ENCODE measurements at regions of chr11 and their contacts with region 1.

Region 1: DNA sequence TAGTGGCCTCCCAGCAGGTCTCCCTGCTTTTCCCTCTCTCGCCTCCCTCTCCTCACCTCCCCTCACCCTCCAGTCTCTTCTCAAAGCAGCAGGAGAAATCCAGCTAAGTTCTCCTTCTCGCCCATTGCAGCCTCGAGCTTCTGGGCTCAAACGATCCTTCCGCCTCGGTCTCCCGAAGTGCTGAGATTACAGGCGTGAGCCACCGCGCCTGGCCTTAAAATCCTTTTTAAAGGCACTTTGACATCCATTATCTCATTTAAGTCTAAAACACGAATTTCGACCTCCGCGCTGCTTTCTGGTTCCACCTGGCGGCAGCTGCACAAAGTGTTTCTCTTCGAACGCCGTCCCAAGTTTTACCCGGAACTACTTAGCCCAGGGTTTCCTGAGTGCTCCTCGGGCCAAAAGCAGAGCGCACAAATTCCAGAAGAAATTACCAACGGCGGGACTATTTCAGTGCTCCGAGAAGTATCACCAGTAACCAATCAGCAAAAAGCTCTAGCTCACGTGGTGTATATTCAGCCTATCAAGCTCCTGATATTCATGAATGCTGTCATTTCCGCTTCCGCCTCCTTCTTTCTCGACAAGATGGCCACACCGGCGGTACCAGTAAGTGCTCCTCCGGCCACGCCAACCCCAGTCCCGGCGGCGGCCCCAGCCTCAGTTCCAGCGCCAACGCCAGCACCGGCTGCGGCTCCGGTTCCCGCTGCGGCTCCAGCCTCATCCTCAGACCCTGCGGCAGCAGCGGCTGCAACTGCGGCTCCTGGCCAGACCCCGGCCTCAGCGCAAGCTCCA is at the start of gene EIF3F:
- DNase-seq: peak; percentile 82 to 96 (median 92)
- ATAC-seq: peak; percentile 98 to 100 (median 98)
- H3K4me3 ChIP-seq: peak within 1 kb of the TSS; percentile 55 to 89 (median 70)
- H3K27ac ChIP-seq: peak within 1 kb of the TSS; percentile 3 to 66 (median 58)
- H3K4me1 ChIP-seq: peaks cover 16 to 37% (median 21%) of the 10 kb centered on the region in 3 donors
- H3K27me3 ChIP-seq: no peaks in the 10 kb centered on the region
- CTCF ChIP-seq: peak; percentile 64 to 79 (median 79)
- total RNA-seq, gene EIF3F: 132 to 201 (median 175) TPM

Region 2: DNA sequence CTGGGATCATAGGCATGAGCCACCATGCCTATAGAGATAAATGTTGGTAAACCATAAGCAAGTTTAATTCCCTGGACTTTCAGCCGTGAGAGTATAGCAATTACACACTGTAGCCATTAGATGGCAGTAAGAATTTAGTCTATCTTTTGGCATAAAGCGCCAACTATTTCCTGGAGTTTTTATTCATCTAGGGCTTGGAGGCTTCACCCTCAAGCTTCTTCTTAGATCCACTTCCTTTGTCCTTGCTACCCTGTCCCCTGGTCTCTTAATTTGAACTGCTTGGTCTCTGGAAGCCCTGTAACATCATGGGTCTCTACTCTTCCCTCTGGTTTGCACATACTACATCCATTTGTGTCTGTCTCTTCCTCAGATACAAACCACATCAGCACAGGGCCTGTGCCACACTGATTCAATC is 94.1 kb before region 1 on chr11:
- intact Hi-C with region 1: loop called in 2 of 3 experiments (anchors 5 kb)
- DNase-seq: no peak
- ATAC-seq: peak; percentile 71 to 90 (median 79)
- H3K4me3 ChIP-seq: no peak overlapping the region
- H3K27ac ChIP-seq: peak overlapping the region in 3 of 4 donors; percentile 4 to 63 (median 60)
- H3K4me1 ChIP-seq: peaks cover 19 to 37% (median 36%) of the 10 kb centered on the region in 3 donors
- H3K27me3 ChIP-seq: no peaks in the 10 kb centered on the region
- CTCF ChIP-seq: peak; percentile 54 to 71 (median 60)

Region 3: GRCh38 chr11:7918127-7918526 is 68.8 kb before region 1 on chr11:
- intact Hi-C with region 1: no loop called
- DNase-seq: no peak
- ATAC-seq: no peak
- H3K4me3 ChIP-seq: no peak overlapping the region
- H3K27ac ChIP-seq: no peak overlapping the region
- H3K4me1 ChIP-seq: no peaks in the 10 kb centered on the region
- H3K27me3 ChIP-seq: no peaks in the 10 kb centered on the region
- CTCF ChIP-seq: no peak

Measured in pancreas (tissue), 10 donors.